ENCODE measurements at regions of chr1 and their contacts with region 1.

Region 1: GRCh38 chr1:92831762-92832536 is at the start of gene RPL5:
- DNase-seq: peak; percentile 98
- ATAC-seq: peak; percentile 88
- H3K4me3 Mint-ChIP-seq: peak within 1 kb of the TSS; percentile 84
- H3K27ac Mint-ChIP-seq: peak within 1 kb of the TSS; percentile 95
- H3K4me1 Mint-ChIP-seq: peaks cover 35% of the 10 kb centered on the region
- H3K27me3 Mint-ChIP-seq: no peaks in the 10 kb centered on the region
- total RNA-seq, gene RPL5: 1,359 to 1,602 TPM

Region 2: DNA sequence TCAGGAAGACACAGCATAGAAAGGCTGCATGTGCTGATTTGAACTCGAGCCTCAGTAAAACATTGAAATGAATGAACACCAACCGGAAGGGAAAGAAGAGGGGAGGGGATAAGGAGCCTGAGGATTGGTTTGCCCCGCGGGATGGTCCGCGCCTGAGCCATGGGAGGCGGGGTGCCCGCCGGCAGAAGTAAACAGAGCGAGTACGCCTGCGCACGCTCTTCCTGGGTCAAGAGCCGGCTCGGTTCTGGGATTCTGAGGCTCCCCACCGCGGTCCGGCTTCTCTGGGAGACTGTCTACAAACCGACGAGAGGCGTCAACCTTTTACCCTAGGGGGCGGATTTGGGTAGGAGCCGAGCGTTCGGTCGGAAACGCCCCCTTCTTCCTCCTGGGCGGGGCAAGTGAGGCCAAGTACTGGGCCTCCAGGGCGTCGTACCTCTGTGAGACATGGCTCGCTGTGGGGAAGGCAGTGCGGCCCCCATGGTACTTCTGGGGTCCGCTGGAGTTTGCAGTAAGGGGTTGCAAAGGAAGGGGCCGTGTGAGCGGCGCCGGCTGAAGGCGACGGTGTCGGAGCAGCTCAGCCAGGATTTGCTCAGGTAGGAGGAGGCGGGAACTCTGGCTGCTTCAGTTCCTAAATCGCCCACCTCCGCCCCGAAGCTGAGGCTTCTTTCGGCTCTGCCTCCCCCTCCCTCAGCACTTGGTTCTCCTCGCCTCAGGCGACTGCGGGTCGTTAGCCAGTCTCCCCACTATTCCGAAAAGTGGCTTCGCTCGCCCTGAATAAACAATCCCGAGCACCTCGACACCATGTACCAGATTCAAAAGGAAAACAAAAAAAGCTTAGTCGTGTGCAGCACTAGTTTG is 751.6 kb before region 1 on chr1 and contains the start of gene BTBD8:
- CTCF ChIA-PET with region 1: interaction called, 3 read pairs
- POLR2A ChIA-PET with region 1: no interaction called
- intact Hi-C with region 1: loop called in 1 of 2 experiments (anchors 5 kb)
- DNase-seq: peak; percentile 90
- ATAC-seq: peak; percentile 96
- H3K4me3 Mint-ChIP-seq: peak within 1 kb of the TSS; percentile 84
- H3K27ac Mint-ChIP-seq: peak within 1 kb of the TSS; percentile 94
- H3K4me1 Mint-ChIP-seq: peaks cover 15% of the 10 kb centered on the region
- H3K27me3 Mint-ChIP-seq: no peaks in the 10 kb centered on the region
- total RNA-seq, gene BTBD8: 1.8 to 2.4 TPM

Region 3: GRCh38 chr1:92583821-92584760 is 247.9 kb before region 1 on chr1:
- CTCF ChIA-PET with region 1: interaction called, 4 read pairs
- POLR2A ChIA-PET with region 1: no interaction called
- intact Hi-C with region 1: loop called (anchors 10 kb)
- DNase-seq: no peak
- ATAC-seq: peak; percentile 60
- H3K4me3 Mint-ChIP-seq: peak overlapping the region; percentile 68
- H3K27ac Mint-ChIP-seq: peak overlapping the region; percentile 92
- H3K4me1 Mint-ChIP-seq: peaks cover 79% of the 10 kb centered on the region
- H3K27me3 Mint-ChIP-seq: no peaks in the 10 kb centered on the region

Region 4: GRCh38 chr1:92784639-92785500 is 47.1 kb before region 1 on chr1 and contains the start of gene EVI5:
- CTCF ChIA-PET with region 1: interaction called, 4 read pairs
- POLR2A ChIA-PET with region 1: interaction called, 4 read pairs
- intact Hi-C with region 1: loop called (anchors 1 to 2 kb)
- DNase-seq: peak; percentile 77
- ATAC-seq: peak; percentile 83
- H3K4me3 Mint-ChIP-seq: peak within 1 kb of the TSS; percentile 71
- H3K27ac Mint-ChIP-seq: no peak within 1 kb of the TSS
- H3K4me1 Mint-ChIP-seq: peaks cover 13% of the 10 kb centered on the region
- H3K27me3 Mint-ChIP-seq: peaks cover 32% of the 10 kb centered on the region
- total RNA-seq, gene EVI5: 28.5 to 32.6 TPM

Region 5: GRCh38 chr1:92858564-92859399 is 26.8 kb after region 1 on chr1:
- CTCF ChIA-PET with region 1: interaction called, 20 read pairs
- POLR2A ChIA-PET with region 1: no interaction called
- intact Hi-C with region 1: no loop called
- DNase-seq: peak; percentile 58
- ATAC-seq: peak; percentile 86
- H3K4me3 Mint-ChIP-seq: peak overlapping the region; percentile 48
- H3K27ac Mint-ChIP-seq: peak overlapping the region; percentile 48
- H3K4me1 Mint-ChIP-seq: peaks cover 17% of the 10 kb centered on the region
- H3K27me3 Mint-ChIP-seq: no peaks in the 10 kb centered on the region

Region 6: GRCh38 chr1:93078986-93079654 is 247.2 kb after region 1 on chr1 and contains the start of gene MTF2:
- CTCF ChIA-PET with region 1: no interaction called
- POLR2A ChIA-PET with region 1: interaction called, 3 read pairs
- intact Hi-C with region 1: loop called in 1 of 2 experiments (anchors 1 kb)
- DNase-seq: peak; percentile 97
- ATAC-seq: peak; percentile 91
- H3K4me3 Mint-ChIP-seq: peak within 1 kb of the TSS; percentile 94
- H3K27ac Mint-ChIP-seq: peak within 1 kb of the TSS; percentile 94
- H3K4me1 Mint-ChIP-seq: peaks cover 29% of the 10 kb centered on the region
- H3K27me3 Mint-ChIP-seq: no peaks in the 10 kb centered on the region
- total RNA-seq, gene MTF2: 49.8 to 55.0 TPM

Region 7: DNA sequence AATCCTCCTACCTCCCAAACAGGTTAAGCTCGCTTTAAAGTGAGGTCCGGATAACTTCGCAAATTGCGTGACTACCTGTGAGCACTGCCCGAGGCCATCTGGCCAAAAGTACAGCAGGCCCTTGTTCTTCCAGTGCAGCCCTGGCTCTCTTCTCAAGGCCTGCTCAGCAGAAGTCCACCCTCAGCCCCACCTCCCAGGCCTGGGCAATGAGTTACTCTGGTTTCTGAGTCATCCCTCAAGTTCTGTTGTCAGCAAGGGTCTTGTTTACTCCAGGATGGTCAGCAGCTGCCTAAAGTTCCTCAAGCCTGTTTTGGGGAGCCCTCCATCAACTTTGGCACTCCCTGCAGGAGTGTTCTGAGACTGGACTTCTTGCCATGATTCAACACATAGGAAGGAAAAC is 747.9 kb after region 1 on chr1:
- CTCF ChIA-PET with region 1: no interaction called
- POLR2A ChIA-PET with region 1: no interaction called
- intact Hi-C with region 1: no loop called
- DNase-seq: no peak
- ATAC-seq: no peak
- H3K4me3 Mint-ChIP-seq: no peak overlapping the region
- H3K27ac Mint-ChIP-seq: no peak overlapping the region
- H3K4me1 Mint-ChIP-seq: no peaks in the 10 kb centered on the region
- H3K27me3 Mint-ChIP-seq: no peaks in the 10 kb centered on the region

Region 8: DNA sequence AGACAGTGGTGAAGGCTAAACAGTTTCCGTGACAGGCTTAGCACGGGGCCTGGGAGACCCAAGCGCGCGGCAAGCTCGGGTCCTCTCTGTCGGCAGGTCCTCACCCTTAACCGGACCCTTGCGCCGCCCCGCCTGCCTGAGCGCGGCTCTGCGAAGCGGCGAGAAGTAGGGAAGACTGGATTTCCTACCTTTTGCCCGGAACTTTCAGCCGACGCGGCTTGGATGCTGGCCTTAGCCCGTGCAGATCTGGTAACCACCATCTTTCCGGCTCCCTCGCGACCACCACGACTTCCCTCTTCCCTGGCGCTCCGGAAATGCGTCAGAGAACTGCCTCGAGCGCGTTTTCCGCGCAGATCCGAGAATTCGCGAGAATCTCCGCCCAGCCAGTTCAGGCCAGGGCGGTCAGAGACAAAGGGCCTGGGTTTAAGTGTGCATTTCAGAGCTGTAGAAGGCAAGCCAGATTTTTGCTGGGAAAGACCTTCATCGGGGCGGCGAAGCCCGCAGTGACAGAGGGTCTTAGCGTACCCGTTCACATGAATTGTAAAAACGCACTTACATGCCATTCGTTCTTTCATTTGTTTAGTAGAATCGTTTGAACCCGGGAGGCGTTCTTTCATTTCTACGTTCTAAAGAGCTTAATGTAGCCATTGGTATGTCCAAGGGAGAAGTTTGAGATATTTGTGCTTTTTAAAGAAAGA is 1047.1 kb after region 1 on chr1 and contains the start of gene DNTTIP2:
- CTCF ChIA-PET with region 1: no interaction called
- POLR2A ChIA-PET with region 1: no interaction called
- intact Hi-C with region 1: loop called in 1 of 2 experiments (anchors 10 kb)
- DNase-seq: peak; percentile 94
- ATAC-seq: peak; percentile 93
- H3K4me3 Mint-ChIP-seq: peak within 1 kb of the TSS; percentile 92
- H3K27ac Mint-ChIP-seq: peak within 1 kb of the TSS; percentile 97
- H3K4me1 Mint-ChIP-seq: peaks cover 45% of the 10 kb centered on the region
- H3K27me3 Mint-ChIP-seq: no peaks in the 10 kb centered on the region
- total RNA-seq, gene DNTTIP2: 82.8 to 84.9 TPM

Measured in activated CD4-positive, alpha-beta T cell treated with anti-CD3 and anti-CD28 coated beads for 36 hours (primary cell).